ENCODE measurements at regions of chr21 and their contacts with region 1.

Region 1: GRCh38 chr21:17679002-17679600 is 66.4 kb upstream of the BTG3 start:
- DNase-seq: peak; percentile 69
- CTCF ChIP-seq: peak; percentile 79

Region 2: GRCh38 chr21:17793246-17794123 is 114.4 kb after region 1 on chr21:
- in situ Hi-C with region 1: loop called (anchors 25 kb)
- DNase-seq: no peak
- CTCF ChIP-seq: no peak

Region 3: DNA sequence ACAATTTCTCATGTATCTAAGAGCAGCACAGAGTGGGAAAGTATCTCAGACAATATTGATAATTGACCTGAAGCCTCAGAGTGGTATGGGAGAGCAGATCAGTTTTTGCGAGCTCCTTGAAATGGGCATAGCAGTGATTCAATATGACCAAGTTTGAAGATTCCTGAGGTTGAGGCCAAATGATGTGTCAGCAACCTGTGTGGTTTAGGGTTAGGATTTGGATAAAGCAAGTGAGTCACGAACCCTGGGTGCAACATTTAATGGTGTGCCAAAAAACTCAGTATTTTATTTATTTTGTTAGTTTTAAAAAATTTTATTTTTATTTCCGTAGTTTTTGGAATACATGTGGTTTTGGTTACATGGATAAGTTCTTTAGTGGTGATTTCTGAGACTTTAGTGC is 232.5 kb after region 1 on chr21:
- in situ Hi-C with region 1: loop called (anchors 10 kb)
- DNase-seq: no peak
- CTCF ChIP-seq: no peak

Region 4: DNA sequence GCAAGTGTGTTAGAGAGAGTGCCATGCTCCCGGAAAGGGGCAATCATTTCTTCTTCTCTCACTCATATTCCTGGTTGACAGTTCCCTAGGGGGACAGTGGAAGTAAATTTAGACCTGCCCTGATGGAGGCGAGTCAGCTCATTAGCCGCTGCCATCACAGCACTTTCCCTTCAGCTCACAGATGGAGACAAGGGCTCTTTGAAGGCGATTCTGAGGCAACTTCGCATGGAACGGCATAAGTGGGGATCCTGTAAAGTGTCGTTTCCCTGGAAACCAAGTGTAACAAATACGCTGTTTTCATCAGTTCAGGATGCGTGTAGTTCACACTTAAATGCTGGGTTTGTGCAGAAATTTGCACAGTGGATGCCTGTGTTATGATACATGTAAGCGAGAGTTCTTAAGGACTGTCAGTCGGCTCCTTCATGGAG is 839.0 kb after region 1 on chr21:
- in situ Hi-C with region 1: no loop called
- DNase-seq: no peak
- CTCF ChIP-seq: no peak